ENCODE measurements at regions of chr4 and their contacts with region 1.

Region 1: GRCh38 chr4:37693450-37694190 is 7.4 kb upstream of the RELL1 start:
- DNase-seq: no peak
- H3K4me3 ChIP-seq: no peak overlapping the region
- H3K27ac ChIP-seq: no peak overlapping the region
- H3K4me1 ChIP-seq: no peaks in the 10 kb centered on the region
- H3K27me3 ChIP-seq: no peaks in the 10 kb centered on the region
- CTCF ChIP-seq: no peak

Region 2: DNA sequence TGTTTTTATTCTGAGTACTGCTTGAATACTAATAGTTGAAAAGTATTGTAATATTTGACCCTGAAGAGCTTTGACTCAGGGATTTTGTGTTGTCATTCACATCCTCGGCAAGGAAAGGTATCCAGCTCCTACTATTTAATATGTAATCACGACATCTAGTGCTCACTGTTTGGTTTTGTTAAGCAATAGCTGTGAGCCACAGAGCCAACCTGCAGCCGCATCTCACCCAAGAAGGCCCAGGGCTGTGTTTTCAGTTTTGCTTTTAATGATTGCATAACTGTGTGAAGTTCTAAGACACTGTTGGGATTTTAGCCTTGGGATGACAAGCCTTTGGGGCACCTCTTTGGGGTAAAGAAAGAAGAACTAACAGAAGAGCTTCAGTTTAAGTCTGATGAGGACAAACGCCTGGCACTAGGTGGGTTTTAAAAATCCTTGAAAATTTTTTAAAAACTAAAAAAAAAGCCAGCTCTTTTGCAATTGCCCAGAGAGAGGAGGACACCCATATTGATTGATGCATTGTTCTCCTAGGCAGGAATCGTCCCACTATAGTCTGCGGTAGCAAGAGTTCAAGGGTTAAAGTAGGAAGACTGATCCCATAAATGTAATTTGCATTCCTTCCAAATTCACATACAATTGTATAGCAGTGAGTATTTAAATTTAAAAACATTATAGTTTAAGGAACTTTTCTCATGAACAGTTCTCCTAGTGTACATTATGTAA is 165.3 kb before region 1 on chr4:
- intact Hi-C with region 1: no loop called
- DNase-seq: no peak
- H3K4me3 ChIP-seq: no peak overlapping the region
- H3K27ac ChIP-seq: no peak overlapping the region
- H3K4me1 ChIP-seq: no peaks in the 10 kb centered on the region
- H3K27me3 ChIP-seq: no peaks in the 10 kb centered on the region
- CTCF ChIP-seq: no peak

Region 3: DNA sequence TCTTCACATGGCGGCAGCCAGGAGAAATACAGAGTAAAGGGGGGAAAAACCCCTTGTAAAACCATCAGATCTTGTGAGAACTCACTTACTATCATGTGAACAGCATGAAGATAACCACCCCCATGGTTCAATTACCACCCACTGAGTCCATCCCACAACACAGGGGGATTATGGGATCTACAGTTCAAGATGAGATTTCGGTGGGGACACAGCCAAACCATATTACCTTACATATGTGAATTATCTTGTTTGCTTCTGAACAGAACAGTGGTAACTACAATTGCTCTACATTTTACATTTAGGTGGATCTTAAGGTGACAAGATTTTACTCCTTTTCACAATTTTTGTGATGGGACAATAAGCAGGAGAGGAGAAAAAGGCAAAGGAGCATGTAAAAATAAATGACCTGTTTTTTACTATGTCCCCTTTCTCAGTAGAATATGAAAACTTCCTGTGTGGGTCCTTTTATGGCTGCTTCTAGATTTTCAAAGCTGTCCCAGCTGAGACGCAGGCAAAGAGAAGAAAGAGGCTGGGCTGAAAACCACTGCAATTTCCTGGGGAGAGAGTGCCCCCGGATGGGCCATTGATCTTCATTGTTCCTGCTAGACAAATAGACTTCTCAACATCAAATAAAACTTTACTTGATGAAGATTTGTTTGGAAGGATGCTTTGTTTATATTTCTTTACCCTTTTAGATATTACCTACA is 87.0 kb after region 1 on chr4:
- intact Hi-C with region 1: loop called (anchors 10 kb)
- DNase-seq: no peak
- H3K4me3 ChIP-seq: no peak overlapping the region
- H3K27ac ChIP-seq: no peak overlapping the region
- H3K4me1 ChIP-seq: no peaks in the 10 kb centered on the region
- H3K27me3 ChIP-seq: no peaks in the 10 kb centered on the region
- CTCF ChIP-seq: no peak

Region 4: DNA sequence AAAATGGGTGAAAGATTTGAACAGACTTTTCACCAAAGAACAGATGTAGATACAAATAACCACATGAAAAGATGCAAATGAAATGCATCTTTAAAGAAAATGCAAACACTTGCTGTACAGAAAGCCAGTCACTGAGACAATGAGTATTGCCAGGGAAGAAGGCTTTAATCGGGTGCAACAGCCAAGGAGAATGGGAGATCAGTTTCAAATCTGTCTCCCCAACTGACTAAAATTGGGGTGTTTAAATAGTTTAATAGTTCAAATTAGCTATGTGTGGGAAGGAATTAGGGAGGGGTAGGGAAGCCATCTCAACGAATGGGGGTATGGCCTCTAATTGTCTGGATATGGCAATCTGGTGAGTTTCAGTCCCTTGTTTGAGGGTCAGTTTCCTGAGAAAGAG is 562.0 kb after region 1 on chr4:
- intact Hi-C with region 1: no loop called
- DNase-seq: no peak
- H3K4me3 ChIP-seq: no peak overlapping the region
- H3K27ac ChIP-seq: no peak overlapping the region
- H3K4me1 ChIP-seq: no peaks in the 10 kb centered on the region
- H3K27me3 ChIP-seq: no peaks in the 10 kb centered on the region
- CTCF ChIP-seq: no peak